Calu3 (cell line): ENCODE measurements at regions of chr10 and their contacts with region 1.

Region 1: DNA sequence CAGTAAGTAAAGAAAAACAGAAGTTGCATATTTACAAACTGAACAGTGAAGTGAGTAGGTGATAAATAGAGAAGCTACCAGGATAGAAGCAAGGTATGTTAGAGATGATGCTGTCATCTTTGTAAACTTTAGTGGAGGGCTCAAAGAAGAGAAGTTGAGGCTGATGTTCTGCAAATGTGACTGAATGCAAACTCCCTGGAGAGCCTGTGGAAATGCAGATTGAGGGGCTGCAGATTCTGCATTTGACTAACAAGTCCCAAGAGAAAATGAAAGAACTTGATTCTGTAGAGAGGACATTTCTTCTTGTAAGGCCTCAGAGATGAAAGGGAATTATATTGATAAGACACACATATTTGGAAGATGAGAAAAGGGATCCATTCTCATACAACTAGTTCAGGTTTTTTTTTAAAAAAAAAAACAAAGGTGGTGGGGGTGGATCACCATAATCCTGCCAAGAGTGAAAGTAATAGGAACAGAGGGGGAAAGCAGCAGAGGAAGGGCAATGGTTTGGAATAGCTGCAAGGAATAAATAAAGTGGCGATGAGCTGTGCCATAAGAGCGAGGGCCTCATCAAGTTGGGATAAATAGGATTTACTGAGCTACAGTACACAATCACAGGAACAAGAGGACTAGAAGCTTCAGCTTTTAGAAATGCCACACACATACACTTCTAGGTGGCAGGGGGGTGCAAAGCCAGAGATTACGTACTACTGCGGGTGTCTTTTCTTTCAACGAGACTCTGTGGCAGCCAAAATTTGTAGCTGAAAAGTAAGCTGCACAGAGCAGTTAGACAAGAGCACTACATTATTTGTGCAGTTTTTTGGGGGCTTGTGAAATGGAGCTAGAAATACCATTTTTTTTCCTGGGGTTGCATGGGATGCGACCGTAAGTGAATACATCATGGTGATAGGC is 778.5 kb downstream of the NRG3 start:
- DNase-seq: no peak
- H3K4me3 Mint-ChIP-seq: no peak overlapping the region
- H3K27ac Mint-ChIP-seq: no peak overlapping the region
- H3K4me1 Mint-ChIP-seq: no peaks in the 10 kb centered on the region
- H3K27me3 Mint-ChIP-seq: no peaks in the 10 kb centered on the region
- CTCF ChIP-seq: no peak

Region 2: DNA sequence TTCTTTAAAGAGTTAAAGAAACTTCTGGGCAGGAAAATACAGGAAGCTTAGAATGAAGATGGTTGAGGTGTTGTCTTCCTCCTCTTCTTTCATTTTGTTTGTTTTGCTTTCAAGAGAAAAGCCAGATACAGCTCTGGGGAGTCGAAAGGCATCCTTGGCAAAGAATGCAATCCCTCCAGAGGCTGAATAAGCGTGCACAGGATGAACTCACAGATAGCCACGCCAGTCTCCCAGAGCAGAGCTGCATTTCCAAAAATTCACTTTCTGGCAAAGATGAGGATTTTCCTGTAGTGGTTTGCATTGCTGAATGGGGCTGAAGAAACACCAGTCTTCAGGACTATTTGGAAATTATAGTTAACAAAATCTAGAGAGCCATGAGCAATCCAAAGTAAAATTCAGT is 442.2 kb before region 1 on chr10:
- CTCF ChIA-PET with region 1: no interaction called
- intact Hi-C with region 1: no loop called
- DNase-seq: no peak
- H3K4me3 Mint-ChIP-seq: no peak overlapping the region
- H3K27ac Mint-ChIP-seq: no peak overlapping the region
- H3K4me1 Mint-ChIP-seq: no peaks in the 10 kb centered on the region
- H3K27me3 Mint-ChIP-seq: no peaks in the 10 kb centered on the region
- CTCF ChIP-seq: no peak

Region 3: DNA sequence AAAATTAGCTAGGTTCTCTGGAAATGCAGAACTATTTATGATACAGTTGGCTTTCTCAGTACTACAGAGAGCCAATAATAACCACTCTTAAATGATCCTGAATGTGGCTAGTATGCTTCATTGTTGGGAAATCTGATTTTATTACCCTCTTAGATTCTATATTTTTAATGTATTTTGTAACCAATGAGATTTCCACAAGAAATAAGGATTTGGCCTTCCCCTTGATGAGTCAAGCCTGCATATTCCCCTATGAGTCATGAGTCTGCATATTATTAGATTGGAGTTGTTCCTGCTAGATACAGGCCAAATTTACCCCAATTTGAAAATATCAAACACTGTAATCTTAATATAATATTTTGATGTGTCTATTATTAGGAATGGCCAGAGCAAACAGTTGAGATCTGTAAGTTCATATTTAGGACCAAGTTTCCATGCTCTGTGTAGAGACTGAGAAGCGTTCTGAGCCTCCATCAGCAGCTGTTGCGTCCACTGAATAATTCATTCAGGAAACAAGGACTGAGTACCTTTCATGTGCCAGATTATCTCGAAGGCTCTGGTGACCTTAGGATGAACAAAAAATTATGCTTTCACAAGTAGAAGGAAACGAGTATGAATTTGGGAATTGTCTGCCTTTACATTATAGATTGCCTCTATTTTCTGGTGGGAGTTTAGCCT is 14.9 kb after region 1 on chr10:
- CTCF ChIA-PET with region 1: no interaction called
- intact Hi-C with region 1: loop called (anchors 2 kb)
- DNase-seq: no peak
- H3K4me3 Mint-ChIP-seq: no peak overlapping the region
- H3K27ac Mint-ChIP-seq: no peak overlapping the region
- H3K4me1 Mint-ChIP-seq: peaks cover 1% of the 10 kb centered on the region
- H3K27me3 Mint-ChIP-seq: no peaks in the 10 kb centered on the region
- CTCF ChIP-seq: no peak